ENCODE measurements at regions of chr6 and their contacts with region 1.

Region 1: GRCh38 chr6:33958526-33959333 is 154.9 kb upstream of the MLN start:
- DNase-seq: peak in 1 of 2 donors; percentile 26
- ATAC-seq: no peak

Region 2: DNA sequence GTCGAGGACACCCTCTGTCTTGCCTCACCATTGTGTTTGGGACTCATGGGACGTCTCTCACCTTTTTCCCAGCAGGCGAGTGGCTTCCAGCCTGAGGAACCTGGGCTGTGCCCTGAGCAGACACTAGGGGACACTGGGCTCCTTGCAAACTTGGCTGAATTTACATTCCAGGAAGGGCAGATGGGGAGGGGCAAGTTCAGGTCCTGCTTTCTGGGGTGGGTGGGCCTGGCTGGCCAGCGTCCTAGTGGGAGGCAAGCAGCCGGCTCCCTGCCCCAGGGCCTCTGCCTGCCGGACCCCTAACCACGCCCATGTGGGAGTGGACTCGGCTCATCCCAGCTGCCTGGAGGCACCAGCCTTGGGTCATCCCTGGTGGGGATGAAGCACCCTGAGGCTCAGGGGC is 106.8 kb before region 1 on chr6:
- intact Hi-C with region 1: loop called in 1 of 2 experiments (anchors 5 kb)
- DNase-seq: peak; percentile 31 to 37
- ATAC-seq: peak; percentile 88

Region 3: GRCh38 chr6:34172941-34173741 is 214.4 kb after region 1 on chr6:
- intact Hi-C with region 1: no loop called
- DNase-seq: peak in 1 of 2 donors; percentile 2
- ATAC-seq: no peak

Region 4: DNA sequence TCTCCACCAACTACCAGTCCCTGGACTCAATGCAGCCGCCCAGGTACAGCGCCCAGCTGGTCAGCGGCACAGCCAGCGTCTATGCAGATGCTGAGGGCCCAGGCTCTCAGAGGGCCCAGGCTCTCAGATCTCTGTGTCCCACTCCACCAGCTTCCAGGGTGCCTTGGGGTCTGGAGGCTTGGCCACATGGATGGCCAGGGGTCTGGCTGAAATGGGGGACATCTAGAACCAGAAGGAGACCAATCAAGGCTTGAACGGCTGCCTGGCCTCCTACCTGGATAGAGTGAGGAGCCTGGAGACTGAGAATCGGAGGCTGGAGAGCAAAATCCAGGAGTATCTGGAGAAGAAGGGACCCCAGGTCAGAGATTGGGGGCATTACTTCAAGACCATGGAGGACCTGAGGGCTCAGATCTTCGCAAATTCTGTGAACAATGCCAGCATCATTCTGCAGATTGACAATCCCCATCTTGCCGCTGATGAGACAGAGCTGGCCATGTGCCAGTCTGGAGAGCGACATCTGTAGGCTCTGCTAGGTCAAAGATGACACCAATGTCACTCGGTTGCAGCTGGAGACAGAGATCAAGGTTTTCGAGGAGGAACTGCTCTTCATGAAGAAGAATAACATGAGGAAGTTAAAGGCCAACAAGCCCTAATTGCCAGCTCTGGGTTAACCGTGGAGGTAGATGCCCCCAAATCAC is 231.2 kb after region 1 on chr6:
- intact Hi-C with region 1: no loop called
- DNase-seq: peak in 1 of 2 donors; percentile 42
- ATAC-seq: no peak